AG04450 (cell line): ENCODE measurements at regions of chr19 and their contacts with region 1.

Region 1: GRCh38 chr19:54029930-54030490 is 33.7 kb downstream of the VSTM1 start:
- DNase-seq: no peak
- H3K4me3 ChIP-seq: no peak overlapping the region
- H3K27ac ChIP-seq: no peak overlapping the region
- H3K27me3 ChIP-seq: peaks cover 2% of the 10 kb centered on the region
- CTCF ChIP-seq: peak; percentile 69

Region 2: DNA sequence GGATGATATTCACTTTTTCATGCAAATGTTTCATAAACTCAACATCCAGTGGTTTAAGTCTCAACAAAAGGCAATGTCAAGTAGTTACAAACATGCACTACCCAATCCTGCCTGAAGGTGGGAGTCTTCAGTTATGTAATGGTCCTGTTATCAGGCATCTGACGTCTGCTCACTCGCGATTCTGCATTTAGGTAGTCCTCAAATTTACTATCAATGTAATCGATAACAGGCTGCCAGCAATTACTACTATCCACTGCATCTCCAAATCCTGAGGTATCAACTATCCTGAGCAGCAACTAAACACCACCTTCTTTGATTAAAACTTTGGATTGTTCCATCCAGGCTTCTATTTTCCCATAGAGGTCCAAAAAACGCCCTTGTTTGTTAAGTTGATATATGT is 257.1 kb before region 1 on chr19:
- CTCF ChIA-PET with region 1: interaction called, 11 read pairs
- POLR2A ChIA-PET with region 1: no interaction called
- DNase-seq: peak; percentile 6
- H3K4me3 ChIP-seq: no peak overlapping the region
- H3K27ac ChIP-seq: no peak overlapping the region
- H3K27me3 ChIP-seq: no peaks in the 10 kb centered on the region
- CTCF ChIP-seq: peak; percentile 73

Region 3: DNA sequence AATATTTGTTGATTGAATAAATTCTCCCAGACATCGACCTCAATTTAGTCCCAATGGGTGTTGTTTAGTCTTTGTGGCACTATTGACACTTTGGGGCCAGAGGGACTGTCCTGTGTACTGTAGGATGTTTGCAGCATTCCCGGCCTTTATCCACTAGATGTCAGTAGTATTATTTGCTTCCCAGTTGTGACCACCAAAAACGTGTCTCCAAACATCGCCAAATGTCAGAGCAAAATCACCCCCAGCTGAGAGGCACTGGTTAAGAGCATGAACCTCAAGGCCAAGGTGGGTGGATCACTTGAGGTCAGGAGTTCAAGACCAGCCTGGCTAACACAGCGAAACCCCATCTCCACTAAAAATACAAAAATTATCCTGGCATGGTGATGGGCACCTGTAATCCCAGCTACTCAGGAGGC is 221.3 kb before region 1 on chr19:
- CTCF ChIA-PET with region 1: interaction called, 51 read pairs
- POLR2A ChIA-PET with region 1: no interaction called
- DNase-seq: no peak
- H3K4me3 ChIP-seq: no peak overlapping the region
- H3K27ac ChIP-seq: no peak overlapping the region
- H3K27me3 ChIP-seq: no peaks in the 10 kb centered on the region
- CTCF ChIP-seq: peak; percentile 67

Region 4: GRCh38 chr19:53849237-53849676 is 180.8 kb before region 1 on chr19:
- CTCF ChIA-PET with region 1: interaction called, 15 read pairs
- POLR2A ChIA-PET with region 1: no interaction called
- DNase-seq: no peak
- H3K4me3 ChIP-seq: no peak overlapping the region
- H3K27ac ChIP-seq: no peak overlapping the region
- H3K27me3 ChIP-seq: no peaks in the 10 kb centered on the region
- CTCF ChIP-seq: no peak

Region 5: DNA sequence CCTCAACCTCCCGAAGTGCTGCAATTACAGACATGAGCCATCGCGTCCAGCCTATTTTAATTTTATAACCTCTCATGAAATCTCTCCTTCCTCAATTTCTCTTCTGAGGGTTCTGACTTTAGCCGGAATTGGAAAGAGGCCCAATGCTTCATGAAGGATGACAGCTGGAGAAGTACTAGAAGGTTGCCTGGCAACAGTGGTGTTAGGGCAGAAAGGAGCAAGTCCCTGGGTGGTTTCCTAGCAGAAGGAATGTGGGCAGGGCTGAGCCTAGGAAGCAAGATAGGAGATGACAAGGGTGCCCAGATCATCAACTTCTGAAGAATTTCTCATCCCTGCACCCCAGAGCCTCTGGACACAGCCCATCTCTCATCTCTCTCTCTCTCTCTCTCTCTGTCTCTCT is 12.7 kb before region 1 on chr19:
- CTCF ChIA-PET with region 1: interaction called, 22 read pairs
- POLR2A ChIA-PET with region 1: no interaction called
- DNase-seq: no peak
- H3K4me3 ChIP-seq: no peak overlapping the region
- H3K27ac ChIP-seq: no peak overlapping the region
- H3K27me3 ChIP-seq: no peaks in the 10 kb centered on the region
- CTCF ChIP-seq: no peak

Region 6: GRCh38 chr19:54096617-54097129 is 66.7 kb after region 1 on chr19:
- CTCF ChIA-PET with region 1: interaction called, 10 read pairs
- POLR2A ChIA-PET with region 1: no interaction called
- DNase-seq: no peak
- H3K4me3 ChIP-seq: peak overlapping the region; percentile 49
- H3K27ac ChIP-seq: no peak overlapping the region
- H3K27me3 ChIP-seq: no peaks in the 10 kb centered on the region
- CTCF ChIP-seq: peak; percentile 55